BJ (cell line): ENCODE measurements at regions of chr15 and their contacts with region 1.

Region 1: DNA sequence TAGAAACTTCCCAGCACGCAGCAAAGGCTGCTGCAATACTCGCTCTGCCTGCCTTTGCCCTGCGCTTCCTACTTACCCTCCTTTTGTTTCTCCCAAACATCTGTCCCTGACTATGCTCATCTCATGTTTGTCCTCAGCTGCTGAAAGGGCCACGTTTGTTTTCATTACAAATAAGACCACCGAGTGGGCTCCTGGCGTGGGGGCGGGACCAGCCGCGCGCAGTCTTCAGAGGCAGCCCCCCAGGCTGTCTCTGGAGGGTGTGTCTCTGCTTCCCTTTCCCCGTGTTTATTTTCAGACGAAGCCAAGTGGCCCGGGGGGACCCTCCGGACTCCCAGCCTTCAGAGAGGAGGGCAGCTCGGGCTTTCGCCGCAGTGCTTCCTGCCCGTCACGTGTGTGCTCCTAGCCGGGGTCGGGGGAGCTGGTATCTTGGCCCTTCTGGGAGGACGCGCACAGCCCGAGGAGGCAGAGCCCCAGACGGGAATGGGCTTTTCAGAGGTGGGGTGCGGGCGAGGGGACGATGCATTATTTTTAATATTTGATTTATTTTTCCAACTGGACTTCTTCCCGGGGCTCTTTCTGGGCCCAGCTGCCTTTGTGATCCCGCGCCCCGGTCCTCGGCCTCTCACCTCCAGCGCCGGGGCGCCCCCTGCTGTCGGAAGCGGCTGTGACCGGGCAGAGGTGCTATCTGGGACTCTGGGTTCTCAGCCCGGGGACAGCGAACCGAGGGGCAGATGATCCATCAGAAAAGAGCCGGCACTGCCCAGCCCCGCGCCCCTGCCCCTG is 70.0 kb upstream of the CGNL1 start:
- DNase-seq: no peak
- H3K4me3 ChIP-seq: peak overlapping the region; percentile 48
- H3K27me3 ChIP-seq: no peaks in the 10 kb centered on the region
- CTCF ChIP-seq: peak; percentile 97

Region 2: DNA sequence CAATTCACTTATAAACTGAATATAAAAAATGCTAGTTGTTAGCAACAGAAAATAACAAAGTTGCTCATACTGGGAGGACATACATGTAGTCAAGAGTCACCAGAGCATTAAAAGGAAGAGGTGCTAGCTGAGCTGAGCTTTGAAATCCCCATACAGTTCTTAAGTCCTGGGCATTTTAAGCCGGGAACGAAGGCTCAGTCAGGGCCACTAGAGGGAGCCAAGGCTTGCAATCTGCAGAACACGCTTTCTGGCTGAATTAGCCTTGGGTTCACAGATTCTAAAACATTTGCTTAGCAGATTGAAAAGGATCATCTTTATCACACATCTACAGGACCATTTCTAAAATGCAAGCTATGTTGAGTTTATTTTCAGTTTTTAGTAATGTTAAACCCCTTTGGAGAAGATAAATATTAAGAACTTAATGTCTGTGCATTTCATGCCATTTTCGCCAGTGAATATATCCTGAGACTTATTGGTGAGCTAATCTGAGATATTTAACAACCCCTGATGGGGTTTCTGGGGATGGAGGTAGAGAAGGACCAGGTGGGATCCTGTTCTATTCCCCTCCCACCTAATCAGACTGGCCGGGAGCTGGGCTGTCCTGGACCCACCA is 815.1 kb before region 1 on chr15:
- CTCF ChIA-PET with region 1: interaction called, 16 read pairs
- POLR2A ChIA-PET with region 1: no interaction called
- DNase-seq: peak; percentile 18
- H3K4me3 ChIP-seq: no peak overlapping the region
- H3K27me3 ChIP-seq: no peaks in the 10 kb centered on the region; the same call in 1 of the 2 replicates
- CTCF ChIP-seq: peak; percentile 96

Region 3: DNA sequence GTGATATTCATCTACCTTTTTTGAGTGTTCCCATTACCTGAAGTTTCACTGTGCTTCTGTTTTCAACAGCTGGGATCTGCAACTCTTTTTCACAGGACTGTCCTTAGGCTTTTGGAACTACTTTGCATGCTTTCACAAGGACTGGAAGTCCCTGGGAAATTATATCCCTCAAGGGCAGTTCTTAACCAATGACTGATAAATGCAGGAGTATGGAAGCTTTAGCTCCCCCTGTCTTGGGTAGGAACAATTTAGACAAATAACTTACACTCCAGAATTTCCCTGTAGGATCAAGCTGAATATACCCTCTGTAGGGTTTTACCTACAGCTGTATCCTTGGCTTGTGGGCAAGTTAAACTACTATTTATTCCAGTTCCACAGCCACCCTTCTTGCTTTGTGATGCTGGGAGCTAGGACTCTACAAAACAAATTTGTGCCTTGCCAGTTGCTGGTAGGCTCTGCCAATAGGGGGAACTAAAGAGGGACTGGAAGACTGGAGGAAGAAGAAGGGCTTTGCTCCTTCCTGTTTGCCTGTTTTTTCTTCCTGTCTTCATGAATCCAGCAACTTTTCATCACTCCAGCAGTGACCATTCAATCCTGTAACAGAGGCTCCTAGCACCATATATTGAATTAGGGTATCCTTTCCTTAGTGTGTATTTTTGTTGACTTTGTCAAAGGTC is 566.2 kb before region 1 on chr15:
- CTCF ChIA-PET with region 1: no interaction called
- POLR2A ChIA-PET with region 1: no interaction called
- DNase-seq: no peak
- H3K4me3 ChIP-seq: no peak overlapping the region
- H3K27me3 ChIP-seq: no peaks in the 10 kb centered on the region; the same call in 1 of the 2 replicates
- CTCF ChIP-seq: 0 out of 2 replicates have a peak, but pooled peaks have one; percentile 8

Region 4: GRCh38 chr15:57213862-57214261 is 92.5 kb before region 1 on chr15:
- CTCF ChIA-PET with region 1: interaction called, 21 read pairs
- POLR2A ChIA-PET with region 1: no interaction called
- DNase-seq: no peak
- H3K4me3 ChIP-seq: no peak overlapping the region
- H3K27me3 ChIP-seq: no peaks in the 10 kb centered on the region
- CTCF ChIP-seq: peak; percentile 41

Region 5: DNA sequence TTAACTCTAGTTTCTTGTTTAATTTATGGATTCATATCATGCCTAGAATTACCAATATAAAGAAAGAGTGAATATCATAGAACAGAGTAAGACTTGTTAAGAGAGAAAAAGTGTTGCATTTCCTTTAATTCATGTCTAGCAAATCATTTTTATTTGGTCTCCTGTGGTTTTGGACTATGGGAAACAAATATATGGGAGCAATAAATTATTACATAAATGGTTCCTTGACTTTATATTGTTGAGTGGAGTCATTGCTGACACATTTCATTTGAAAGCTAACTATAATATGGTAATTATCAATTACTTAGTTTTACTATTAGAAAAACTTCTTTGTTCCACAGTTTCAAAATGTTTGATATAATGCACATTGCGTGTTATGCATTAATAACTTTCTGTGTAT is 74.8 kb before region 1 on chr15:
- CTCF ChIA-PET with region 1: interaction called, 10 read pairs
- POLR2A ChIA-PET with region 1: no interaction called
- DNase-seq: no peak
- H3K4me3 ChIP-seq: no peak overlapping the region
- H3K27me3 ChIP-seq: no peaks in the 10 kb centered on the region
- CTCF ChIP-seq: no peak

Region 6: DNA sequence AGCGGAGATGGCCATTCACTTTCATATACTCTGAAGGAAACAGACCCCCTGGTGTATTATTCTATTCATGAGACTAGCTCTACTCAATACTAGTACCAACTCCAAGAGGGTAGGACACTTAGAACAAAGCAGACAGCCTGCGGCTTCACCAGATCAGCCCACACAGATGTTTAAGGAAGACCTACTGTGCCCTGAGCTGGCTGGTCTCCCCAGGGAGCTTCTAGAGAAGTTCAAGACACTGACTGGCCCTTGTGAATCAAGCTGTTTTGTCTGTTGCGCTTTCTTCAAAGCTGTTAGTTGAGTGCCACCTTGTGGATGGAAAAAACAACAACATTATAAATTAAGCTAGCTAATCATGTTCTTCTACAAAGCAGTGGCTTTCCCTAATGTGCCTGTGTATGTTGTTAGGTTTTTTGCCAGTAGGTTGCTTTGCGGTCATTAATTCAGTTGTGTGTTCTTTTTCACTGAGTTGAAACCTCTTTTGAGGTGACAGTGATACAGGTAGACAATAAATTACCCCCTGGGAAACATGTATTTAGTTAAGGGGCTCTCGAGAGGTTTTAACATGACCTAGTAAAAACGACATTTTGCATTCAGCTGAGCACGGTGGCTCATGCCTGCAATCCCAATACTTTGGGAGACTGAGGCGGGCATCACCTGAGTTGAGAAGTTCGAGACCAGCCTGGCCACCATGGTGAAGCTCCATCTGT is 221.2 kb after region 1 on chr15:
- CTCF ChIA-PET with region 1: interaction called, 10 read pairs
- POLR2A ChIA-PET with region 1: no interaction called
- DNase-seq: no peak
- H3K4me3 ChIP-seq: no peak overlapping the region
- H3K27me3 ChIP-seq: no peaks in the 10 kb centered on the region
- CTCF ChIP-seq: peak; percentile 51